Caco-2 (cell line): ENCODE measurements at regions of chr11 and their contacts with region 1.

Region 1: GRCh38 chr11:61792310-61793085 is at the starts of genes FEN1 and TMEM258:
- DNase-seq: peak; percentile 90 to 91
- H3K4me3 ChIP-seq: peak within 1 kb of the TSS; percentile 54
- H3K4me3 Mint-ChIP-seq: peak within 1 kb of the TSS; percentile 96
- H3K27ac Mint-ChIP-seq: peak within 1 kb of the TSS; percentile 100
- H3K4me1 ChIP-seq: peaks cover 5% of the 10 kb centered on the region; the same call in 1 of the 2 replicates
- H3K4me1 Mint-ChIP-seq: peaks cover 21% of the 10 kb centered on the region
- H3K27me3 ChIP-seq: no peaks in the 10 kb centered on the region
- H3K27me3 Mint-ChIP-seq: no peaks in the 10 kb centered on the region
- CTCF ChIP-seq: no peak
- total RNA-seq, gene FEN1: 83.4 and 86.1 TPM in 2 replicates
- total RNA-seq, gene TMEM258: 190 and 197 TPM in 2 replicates

Region 2: DNA sequence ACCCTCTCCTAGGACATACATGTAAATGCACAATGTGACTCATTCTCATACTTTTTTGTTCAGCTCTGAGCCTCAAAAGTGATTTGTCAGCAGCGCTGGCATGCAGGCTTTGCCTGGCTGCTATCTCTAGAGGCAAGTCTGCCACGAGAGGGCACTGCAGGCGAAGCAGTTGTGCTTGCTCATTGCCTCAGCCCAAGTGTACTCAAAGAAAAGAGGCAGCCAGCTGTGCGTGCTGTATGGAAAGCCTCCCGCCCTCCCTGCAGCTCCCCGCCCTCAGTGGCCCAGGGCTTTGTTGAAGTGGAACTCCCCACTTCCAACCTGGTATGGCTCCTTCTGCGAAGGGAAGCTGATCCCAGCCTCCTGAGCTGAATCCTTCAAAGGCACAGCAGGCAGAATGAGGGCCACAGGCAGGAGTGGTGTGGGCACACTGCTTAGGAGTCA is 346.3 kb before region 1 on chr11:
- CTCF ChIA-PET with region 1: no interaction called
- POLR2A ChIA-PET with region 1: no interaction called
- intact Hi-C with region 1: no loop called
- DNase-seq: peak; percentile 83 to 88
- H3K4me3 ChIP-seq: no peak overlapping the region
- H3K4me3 Mint-ChIP-seq: no peak overlapping the region
- H3K27ac Mint-ChIP-seq: no peak overlapping the region
- H3K4me1 ChIP-seq: no peaks in the 10 kb centered on the region
- H3K4me1 Mint-ChIP-seq: peaks cover 6% of the 10 kb centered on the region
- H3K27me3 ChIP-seq: no peaks in the 10 kb centered on the region
- H3K27me3 Mint-ChIP-seq: no peaks in the 10 kb centered on the region
- CTCF ChIP-seq: peak; percentile 79 to 91

Region 3: GRCh38 chr11:61488651-61489291 is 303.7 kb before region 1 on chr11:
- CTCF ChIA-PET with region 1: no interaction called
- POLR2A ChIA-PET with region 1: no interaction called
- intact Hi-C with region 1: no loop called
- DNase-seq: peak; percentile 75 to 80
- H3K4me3 ChIP-seq: no peak overlapping the region
- H3K4me3 Mint-ChIP-seq: peak overlapping the region; percentile 61
- H3K27ac Mint-ChIP-seq: peak overlapping the region; percentile 29
- H3K4me1 ChIP-seq: peaks cover 16% of the 10 kb centered on the region
- H3K4me1 Mint-ChIP-seq: peaks cover 24% of the 10 kb centered on the region
- H3K27me3 ChIP-seq: no peaks in the 10 kb centered on the region
- H3K27me3 Mint-ChIP-seq: no peaks in the 10 kb centered on the region
- CTCF ChIP-seq: no peak

Region 4: GRCh38 chr11:61733120-61733978 is 59.1 kb before region 1 on chr11:
- CTCF ChIA-PET with region 1: interaction called, 11 read pairs
- POLR2A ChIA-PET with region 1: interaction called, 3 read pairs
- intact Hi-C with region 1: no loop called
- DNase-seq: peak; percentile 79 to 85
- H3K4me3 ChIP-seq: no peak overlapping the region
- H3K4me3 Mint-ChIP-seq: no peak overlapping the region
- H3K27ac Mint-ChIP-seq: peak overlapping the region; percentile 84
- H3K4me1 ChIP-seq: no peaks in the 10 kb centered on the region
- H3K4me1 Mint-ChIP-seq: peaks cover 9% of the 10 kb centered on the region
- H3K27me3 ChIP-seq: no peaks in the 10 kb centered on the region
- H3K27me3 Mint-ChIP-seq: no peaks in the 10 kb centered on the region
- CTCF ChIP-seq: peak; percentile 98 to 99

Region 5: DNA sequence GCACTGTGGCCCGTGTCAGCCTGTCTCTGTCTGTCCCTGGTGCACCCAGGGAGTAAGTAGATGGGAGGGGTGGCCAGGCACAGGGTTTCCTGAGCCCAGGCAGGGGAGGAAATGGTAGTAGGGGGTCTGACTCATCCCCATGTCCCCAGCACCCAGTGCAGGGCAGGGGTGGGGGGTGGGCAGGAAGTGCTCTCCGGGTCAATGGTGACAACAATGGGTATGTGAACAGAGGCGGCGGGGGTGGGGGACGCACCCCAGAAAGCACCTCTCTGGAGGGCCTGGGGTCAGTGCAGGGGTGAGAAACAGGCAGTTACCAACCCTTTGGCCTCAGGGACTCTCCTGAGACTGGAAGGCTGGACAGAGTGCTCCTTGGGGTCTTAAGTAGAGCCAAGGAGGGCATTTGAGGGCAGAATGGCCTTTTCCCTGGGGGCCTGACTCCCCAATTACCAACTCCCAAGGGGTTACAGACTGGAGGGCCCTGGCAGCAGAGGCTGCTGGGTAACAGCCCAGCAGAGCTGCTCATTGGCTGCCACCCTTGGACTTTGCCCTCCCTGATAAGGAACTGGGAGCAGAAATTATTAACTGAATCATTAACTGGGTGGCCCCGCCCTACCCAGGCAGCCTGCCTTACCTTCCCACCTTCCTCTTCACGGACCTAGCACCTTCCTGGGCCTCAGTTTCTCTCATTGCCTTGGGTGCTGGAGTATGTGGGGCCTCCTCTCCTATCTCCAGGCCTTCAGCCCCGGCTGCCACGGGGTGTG is 35.9 kb before region 1 on chr11:
- CTCF ChIA-PET with region 1: interaction called, 9 read pairs
- POLR2A ChIA-PET with region 1: interaction called, 3 read pairs
- intact Hi-C with region 1: loop called (anchors 1 kb)
- DNase-seq: peak; percentile 88 to 93
- H3K4me3 ChIP-seq: peak overlapping the region; percentile 18; the same call in 1 of the 2 replicates
- H3K4me3 Mint-ChIP-seq: peak overlapping the region; percentile 71
- H3K27ac Mint-ChIP-seq: peak overlapping the region; percentile 94
- H3K4me1 ChIP-seq: peaks cover 68% of the 10 kb centered on the region
- H3K4me1 Mint-ChIP-seq: peaks cover 37% of the 10 kb centered on the region
- H3K27me3 ChIP-seq: no peaks in the 10 kb centered on the region
- H3K27me3 Mint-ChIP-seq: no peaks in the 10 kb centered on the region
- CTCF ChIP-seq: no peak

Region 6: GRCh38 chr11:61816736-61817455 is 24.4 kb after region 1 on chr11 and contains the start of gene FADS1:
- CTCF ChIA-PET with region 1: interaction called, 57 read pairs
- POLR2A ChIA-PET with region 1: interaction called, 60 read pairs
- intact Hi-C with region 1: loop called (anchors 1 kb)
- DNase-seq: peak; percentile 98 to 99
- H3K4me3 ChIP-seq: peak within 1 kb of the TSS; percentile 85
- H3K4me3 Mint-ChIP-seq: peak within 1 kb of the TSS; percentile 81
- H3K27ac Mint-ChIP-seq: peak within 1 kb of the TSS; percentile 90
- H3K4me1 ChIP-seq: peaks cover 16% of the 10 kb centered on the region
- H3K4me1 Mint-ChIP-seq: peaks cover 18% of the 10 kb centered on the region
- H3K27me3 ChIP-seq: no peaks in the 10 kb centered on the region
- H3K27me3 Mint-ChIP-seq: no peaks in the 10 kb centered on the region
- CTCF ChIP-seq: peak; percentile 72 to 95
- total RNA-seq, gene FADS1: 108 and 116 TPM in 2 replicates

Region 7: GRCh38 chr11:61899146-61899841 is 106.8 kb after region 1 on chr11:
- CTCF ChIA-PET with region 1: interaction called, 29 read pairs
- POLR2A ChIA-PET with region 1: no interaction called
- intact Hi-C with region 1: loop called (anchors 1 kb)
- DNase-seq: peak; percentile 89 to 96
- H3K4me3 ChIP-seq: no peak overlapping the region
- H3K4me3 Mint-ChIP-seq: no peak overlapping the region
- H3K27ac Mint-ChIP-seq: no peak overlapping the region
- H3K4me1 ChIP-seq: no peaks in the 10 kb centered on the region
- H3K4me1 Mint-ChIP-seq: no peaks in the 10 kb centered on the region
- H3K27me3 ChIP-seq: no peaks in the 10 kb centered on the region
- H3K27me3 Mint-ChIP-seq: no peaks in the 10 kb centered on the region
- CTCF ChIP-seq: peak; percentile 100

Region 8: DNA sequence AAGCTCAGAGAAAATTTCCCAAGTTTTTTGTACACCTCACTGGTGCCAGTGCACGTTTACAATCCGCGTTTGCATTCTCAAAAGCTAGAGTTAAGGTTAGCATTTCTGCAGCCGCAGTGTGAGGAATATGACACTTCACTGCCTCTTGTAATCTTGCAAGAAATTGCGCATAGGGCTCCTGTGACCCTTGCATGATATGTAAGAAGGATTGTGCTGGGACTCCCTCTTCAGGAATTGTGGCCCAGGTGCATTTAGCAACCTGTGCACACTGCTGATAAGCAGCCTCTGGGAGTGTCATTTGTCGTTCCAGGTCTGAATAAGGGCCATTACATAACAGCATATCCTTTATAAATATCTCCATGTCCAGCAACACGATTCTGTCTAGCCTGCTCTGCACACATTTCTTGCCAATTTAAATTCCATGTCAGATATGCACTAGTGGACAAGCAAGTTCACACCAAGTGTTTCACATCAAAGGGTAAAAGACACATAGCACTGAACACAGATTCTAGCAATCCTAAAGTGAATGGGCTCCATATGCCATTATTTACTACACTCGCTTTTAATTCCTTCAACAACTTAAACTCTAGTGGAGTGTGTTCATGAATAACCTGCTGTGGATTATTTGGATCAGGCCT is 262.1 kb after region 1 on chr11:
- CTCF ChIA-PET with region 1: no interaction called
- POLR2A ChIA-PET with region 1: no interaction called
- intact Hi-C with region 1: no loop called
- DNase-seq: peak; percentile 83 to 85
- H3K4me3 ChIP-seq: no peak overlapping the region
- H3K4me3 Mint-ChIP-seq: peak overlapping the region; percentile 25
- H3K27ac Mint-ChIP-seq: peak overlapping the region; percentile 81
- H3K4me1 ChIP-seq: 0 out of 2 replicates have a peak, but pooled peaks cover 5% of the 10 kb centered on the region
- H3K4me1 Mint-ChIP-seq: no peaks in the 10 kb centered on the region
- H3K27me3 ChIP-seq: no peaks in the 10 kb centered on the region; the same call in 1 of the 2 replicates
- H3K27me3 Mint-ChIP-seq: no peaks in the 10 kb centered on the region
- CTCF ChIP-seq: peak; percentile 78 to 93

Region 9: DNA sequence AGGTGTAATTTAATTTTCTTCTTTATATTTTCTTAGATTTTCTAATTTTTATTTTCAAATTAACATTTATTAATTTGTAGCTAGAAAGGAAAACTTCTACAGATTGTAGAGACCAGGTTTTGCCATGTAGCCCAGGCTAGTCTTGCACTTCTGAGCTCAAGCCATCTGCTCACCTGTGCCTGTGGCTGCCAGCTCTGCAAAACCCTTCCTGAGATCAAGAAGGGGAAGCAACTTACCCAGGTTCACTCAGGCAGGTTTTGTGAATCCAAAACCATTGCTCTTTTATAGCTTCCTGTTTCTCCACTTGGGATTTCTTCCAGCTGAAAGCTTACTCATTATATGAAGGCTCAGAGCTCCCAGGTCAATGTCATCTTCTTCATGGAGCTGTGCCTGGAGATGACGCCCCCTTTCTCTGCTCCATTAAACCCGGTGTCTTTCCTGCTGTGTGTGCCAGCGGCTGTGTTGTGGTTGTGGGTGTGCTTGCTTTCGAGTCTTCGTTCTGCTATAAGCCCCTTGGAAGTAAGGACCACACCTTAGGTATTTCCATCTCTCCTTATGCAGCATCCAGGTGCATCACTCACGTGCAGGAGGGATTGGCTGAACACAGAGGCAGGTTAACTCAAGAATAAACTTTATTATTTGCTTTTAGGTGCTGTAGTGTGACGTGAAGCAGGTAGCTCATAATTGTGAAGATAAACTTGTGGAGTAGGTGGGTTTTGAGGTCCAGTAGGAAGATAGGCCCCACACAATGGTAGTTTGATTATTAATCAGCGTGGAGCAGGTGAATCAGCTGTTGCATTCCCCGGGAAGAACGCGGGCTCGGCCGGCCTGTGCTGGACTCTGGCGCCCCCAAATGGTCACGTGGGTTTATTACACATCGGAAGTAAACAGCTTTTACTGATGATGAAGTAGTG is 289.1 kb after region 1 on chr11:
- CTCF ChIA-PET with region 1: interaction called, 36 read pairs
- POLR2A ChIA-PET with region 1: no interaction called
- intact Hi-C with region 1: loop called (anchors 1 kb)
- DNase-seq: peak; percentile 71 to 87
- H3K4me3 ChIP-seq: no peak overlapping the region
- H3K4me3 Mint-ChIP-seq: no peak overlapping the region
- H3K27ac Mint-ChIP-seq: no peak overlapping the region
- H3K4me1 ChIP-seq: no peaks in the 10 kb centered on the region
- H3K4me1 Mint-ChIP-seq: no peaks in the 10 kb centered on the region
- H3K27me3 ChIP-seq: no peaks in the 10 kb centered on the region; the same call in 1 of the 2 replicates
- H3K27me3 Mint-ChIP-seq: no peaks in the 10 kb centered on the region
- CTCF ChIP-seq: peak; percentile 89 to 91

Region 10: DNA sequence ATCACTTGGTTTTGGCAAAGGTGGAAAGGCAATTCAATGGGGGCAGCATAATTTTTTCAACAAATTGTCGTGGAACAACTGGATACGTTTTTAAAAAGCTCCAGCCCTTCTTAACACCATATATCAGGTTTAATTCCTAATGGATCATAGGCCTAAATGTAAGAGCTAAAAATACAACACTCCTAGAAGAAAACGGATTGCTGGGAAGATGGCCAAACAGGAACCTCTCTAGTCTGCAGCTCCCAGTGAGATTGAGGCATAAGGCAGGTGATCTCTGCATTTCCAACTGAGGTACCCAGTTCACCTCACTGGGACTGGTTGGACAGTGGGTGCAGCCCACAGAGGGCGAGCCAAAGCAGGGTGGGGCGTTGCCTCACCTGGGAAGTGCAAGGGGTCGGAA is 365.1 kb after region 1 on chr11:
- CTCF ChIA-PET with region 1: no interaction called
- POLR2A ChIA-PET with region 1: no interaction called
- intact Hi-C with region 1: no loop called
- DNase-seq: no peak
- H3K4me3 ChIP-seq: no peak overlapping the region
- H3K4me3 Mint-ChIP-seq: no peak overlapping the region
- H3K27ac Mint-ChIP-seq: no peak overlapping the region
- H3K4me1 ChIP-seq: no peaks in the 10 kb centered on the region
- H3K4me1 Mint-ChIP-seq: no peaks in the 10 kb centered on the region
- H3K27me3 ChIP-seq: no peaks in the 10 kb centered on the region
- H3K27me3 Mint-ChIP-seq: peaks cover 14% of the 10 kb centered on the region
- CTCF ChIP-seq: no peak